ENCODE measurements at regions of chr14 and their contacts with region 1.

Region 1: GRCh38 chr14:22556990-22557623 is 31.9 kb downstream of the DAD1 start:
- DNase-seq: peak; percentile 77 to 80
- ATAC-seq: peak; percentile 86 to 92
- H3K4me3 ChIP-seq: peak overlapping the region; percentile 23; the same call in 1 of the 3 replicates
- H3K27ac ChIP-seq: peak overlapping the region; percentile 81 to 87
- H3K4me1 ChIP-seq: peaks cover 6% of the 10 kb centered on the region; the same call in 1 of the 3 replicates
- CTCF ChIP-seq: peak; percentile 100
- EP300 ChIP-seq: no peak
- POLR2A ChIP-seq: no peak
- RAD21 ChIP-seq: peak; percentile 89 to 100

Region 2: GRCh38 chr14:22265319-22266137 is 291.6 kb before region 1 on chr14:
- CTCF ChIA-PET with region 1: no interaction called
- POLR2A ChIA-PET with region 1: no interaction called
- DNase-seq: no peak
- ATAC-seq: peak in 1 of 2 experiments; percentile 70; a peak in 2 of 6 replicates
- H3K4me3 ChIP-seq: no peak overlapping the region
- H3K27ac ChIP-seq: no peak overlapping the region
- H3K4me1 ChIP-seq: no peaks in the 10 kb centered on the region
- CTCF ChIP-seq: no peak
- EP300 ChIP-seq: no peak
- POLR2A ChIP-seq: no peak
- RAD21 ChIP-seq: peak in 1 of 2 experiments; percentile 27; a peak in 2 of 5 replicates

Region 3: GRCh38 chr14:22333422-22334276 is 223.5 kb before region 1 on chr14:
- CTCF ChIA-PET with region 1: no interaction called
- POLR2A ChIA-PET with region 1: no interaction called
- DNase-seq: peak; percentile 73 to 88
- ATAC-seq: peak; percentile 94
- H3K4me3 ChIP-seq: peak overlapping the region; percentile 8; the same call in 1 of the 3 replicates
- H3K27ac ChIP-seq: peak overlapping the region; percentile 4 to 26; a peak in 3 of 6 replicates
- H3K4me1 ChIP-seq: peaks cover 30% of the 10 kb centered on the region
- CTCF ChIP-seq: no peak
- EP300 ChIP-seq: peak; percentile 38 to 48; a peak in 2 of 5 replicates
- POLR2A ChIP-seq: no peak
- RAD21 ChIP-seq: 0 out of 5 replicates have a peak, but pooled peaks of 1 of the 2 experiments have one; percentile 9

Region 4: GRCh38 chr14:22539831-22540230 is 17.3 kb before region 1 on chr14:
- CTCF ChIA-PET with region 1: interaction called, 46 read pairs
- POLR2A ChIA-PET with region 1: no interaction called
- DNase-seq: no peak
- ATAC-seq: no peak
- H3K4me3 ChIP-seq: no peak overlapping the region
- H3K27ac ChIP-seq: peak overlapping the region; percentile 27 to 48; a peak in 5 of 6 replicates
- H3K4me1 ChIP-seq: peaks cover 20% of the 10 kb centered on the region
- CTCF ChIP-seq: no peak
- EP300 ChIP-seq: no peak
- POLR2A ChIP-seq: no peak
- RAD21 ChIP-seq: no peak

Region 5: GRCh38 chr14:22653012-22653621 is 96.0 kb after region 1 on chr14:
- CTCF ChIA-PET with region 1: interaction called, 376 read pairs
- POLR2A ChIA-PET with region 1: no interaction called
- DNase-seq: peak; percentile 78 to 83
- ATAC-seq: peak; percentile 92 to 95
- H3K4me3 ChIP-seq: no peak overlapping the region
- H3K27ac ChIP-seq: peak overlapping the region; percentile 46 to 59; a peak in 5 of 6 replicates
- H3K4me1 ChIP-seq: peaks cover 38% of the 10 kb centered on the region; the same call in 2 of the 3 replicates
- CTCF ChIP-seq: peak; percentile 82
- EP300 ChIP-seq: no peak
- POLR2A ChIP-seq: no peak
- RAD21 ChIP-seq: peak; percentile 88 to 90

Region 6: DNA sequence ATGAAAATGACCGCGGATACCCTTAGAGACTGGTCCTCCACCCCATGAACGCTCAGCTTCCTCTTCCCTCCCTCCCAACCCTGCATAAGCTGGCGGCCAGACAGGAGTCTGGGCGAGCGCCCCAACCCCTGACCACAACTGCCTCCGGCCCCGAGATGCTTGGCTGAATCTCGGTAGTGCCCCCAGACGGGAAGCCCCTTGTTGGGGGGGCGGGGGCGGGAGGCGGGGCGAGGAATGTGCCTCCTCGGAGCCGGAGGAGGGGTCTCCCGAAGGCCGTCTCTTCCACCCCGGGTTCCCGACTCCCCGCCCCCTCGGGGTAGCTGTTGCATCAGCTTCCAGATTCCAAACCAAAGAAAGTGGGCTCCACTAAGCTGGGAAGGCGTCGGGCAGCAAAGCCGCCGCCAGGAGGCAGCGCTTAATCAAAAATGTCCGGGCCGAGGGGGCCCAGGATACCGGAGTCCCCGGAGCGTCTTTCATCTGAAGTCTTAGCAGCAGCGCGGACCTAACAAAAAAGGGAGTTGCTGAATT is 265.5 kb after region 1 on chr14:
- CTCF ChIA-PET with region 1: interaction called, 35 read pairs
- POLR2A ChIA-PET with region 1: no interaction called
- DNase-seq: peak; percentile 83 to 88
- ATAC-seq: peak; percentile 68 to 90
- H3K4me3 ChIP-seq: peak overlapping the region; percentile 33
- H3K27ac ChIP-seq: peak overlapping the region; percentile 82 to 93
- H3K4me1 ChIP-seq: peaks cover 74% of the 10 kb centered on the region
- CTCF ChIP-seq: peak; percentile 85
- EP300 ChIP-seq: no peak
- POLR2A ChIP-seq: no peak
- RAD21 ChIP-seq: peak; percentile 85 to 94

Region 7: GRCh38 chr14:22865424-22866405 is 308.6 kb after region 1 on chr14:
- CTCF ChIA-PET with region 1: interaction called, 45 read pairs
- POLR2A ChIA-PET with region 1: no interaction called
- DNase-seq: no peak
- ATAC-seq: peak; percentile 52 to 56; a peak in 4 of 6 replicates
- H3K4me3 ChIP-seq: no peak overlapping the region
- H3K27ac ChIP-seq: no peak overlapping the region
- H3K4me1 ChIP-seq: peaks cover 12% of the 10 kb centered on the region
- CTCF ChIP-seq: no peak
- EP300 ChIP-seq: no peak
- POLR2A ChIP-seq: no peak
- RAD21 ChIP-seq: no peak

Region 8: DNA sequence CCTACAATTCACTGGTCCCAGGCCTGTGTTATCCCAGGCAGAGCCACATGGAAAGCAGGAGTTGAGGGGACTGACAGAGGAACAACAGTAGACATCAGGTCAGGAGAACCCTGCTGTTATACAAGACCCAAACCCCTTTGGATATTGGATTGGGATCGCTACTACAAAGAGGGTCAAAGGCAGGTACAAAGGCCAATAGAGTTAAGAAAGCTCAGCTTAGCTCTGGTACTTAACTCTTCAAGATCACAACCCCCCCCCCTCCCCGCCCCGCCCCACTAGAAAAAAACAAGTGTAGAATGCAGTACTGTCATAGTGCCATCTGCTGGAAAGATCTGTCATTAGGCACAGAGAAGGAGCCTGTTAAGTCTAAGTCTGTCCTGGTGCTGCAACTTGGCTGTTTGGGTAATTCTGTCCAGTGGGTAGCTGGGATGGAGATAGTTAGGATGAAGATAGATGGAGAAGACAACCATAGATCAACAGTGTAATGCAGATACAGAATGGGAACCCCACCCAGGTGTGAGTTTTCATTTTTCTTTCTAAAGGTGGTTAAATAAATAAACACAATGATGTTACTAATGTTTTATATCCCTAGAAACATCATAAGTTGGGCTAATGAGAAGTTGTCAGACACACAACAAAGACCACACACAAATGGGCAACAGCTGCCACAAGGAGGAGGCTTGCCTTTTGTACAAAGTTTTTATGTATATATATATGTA is 343.1 kb after region 1 on chr14:
- CTCF ChIA-PET with region 1: interaction called, 56 read pairs
- POLR2A ChIA-PET with region 1: no interaction called
- DNase-seq: peak; percentile 77 to 81
- ATAC-seq: peak; percentile 81 to 83
- H3K4me3 ChIP-seq: no peak overlapping the region
- H3K27ac ChIP-seq: no peak overlapping the region; a peak in 1 of 6 replicates
- H3K4me1 ChIP-seq: peaks cover 17% of the 10 kb centered on the region
- CTCF ChIP-seq: peak; percentile 72
- EP300 ChIP-seq: no peak
- POLR2A ChIP-seq: no peak
- RAD21 ChIP-seq: peak; percentile 62 to 70

Measured in A549 (cell line).